Psoas muscle (tissue), 8 donors: ENCODE measurements at regions of chr12 and their contacts with region 1.

Region 1: DNA sequence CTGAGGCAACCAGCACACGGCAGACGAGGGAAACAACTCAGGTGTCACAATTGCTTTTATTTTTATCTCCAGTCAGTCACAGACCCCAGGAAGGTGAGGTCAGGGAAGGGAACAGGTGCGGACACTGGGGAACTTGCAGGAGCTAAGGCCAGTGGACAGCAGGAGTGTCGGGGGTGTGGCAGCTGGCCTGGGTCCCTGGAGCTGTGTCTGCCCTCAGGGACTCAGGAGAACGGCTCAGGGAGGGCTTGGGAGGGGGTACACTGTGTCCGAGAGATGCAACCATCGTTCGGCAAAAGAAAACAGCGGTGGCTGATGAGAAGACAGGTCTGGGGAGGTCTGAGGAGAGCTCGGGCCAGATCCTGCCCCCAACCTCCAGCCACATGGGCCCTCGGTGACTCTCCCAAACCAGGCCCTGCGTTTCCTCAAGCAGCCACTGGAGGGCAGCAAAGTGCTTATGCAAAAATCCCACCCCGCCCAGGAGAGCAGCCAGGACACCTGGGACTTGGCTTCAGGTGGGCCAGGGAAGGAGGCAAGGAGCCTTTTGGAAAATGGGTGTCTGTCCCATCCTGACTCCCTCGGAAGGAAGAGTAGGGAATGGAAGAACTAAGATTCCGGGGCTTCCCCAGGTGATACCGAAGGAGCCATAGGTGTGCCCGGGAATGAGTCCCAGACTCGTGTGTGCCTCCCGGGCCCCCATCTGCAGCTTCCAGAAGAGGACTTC is 24.1 kb upstream of the BCDIN3D start:
- DNase-seq: peak; percentile 74 to 85
- ATAC-seq: peak; percentile 58 to 79 (median 72)
- H3K4me3 ChIP-seq: no peak overlapping the region
- H3K27ac ChIP-seq: no peak overlapping the region
- H3K4me1 ChIP-seq: peaks cover 17% of the 10 kb centered on the region
- H3K27me3 ChIP-seq: no peaks in the 10 kb centered on the region
- CTCF ChIP-seq: peak; percentile 96

Region 2: DNA sequence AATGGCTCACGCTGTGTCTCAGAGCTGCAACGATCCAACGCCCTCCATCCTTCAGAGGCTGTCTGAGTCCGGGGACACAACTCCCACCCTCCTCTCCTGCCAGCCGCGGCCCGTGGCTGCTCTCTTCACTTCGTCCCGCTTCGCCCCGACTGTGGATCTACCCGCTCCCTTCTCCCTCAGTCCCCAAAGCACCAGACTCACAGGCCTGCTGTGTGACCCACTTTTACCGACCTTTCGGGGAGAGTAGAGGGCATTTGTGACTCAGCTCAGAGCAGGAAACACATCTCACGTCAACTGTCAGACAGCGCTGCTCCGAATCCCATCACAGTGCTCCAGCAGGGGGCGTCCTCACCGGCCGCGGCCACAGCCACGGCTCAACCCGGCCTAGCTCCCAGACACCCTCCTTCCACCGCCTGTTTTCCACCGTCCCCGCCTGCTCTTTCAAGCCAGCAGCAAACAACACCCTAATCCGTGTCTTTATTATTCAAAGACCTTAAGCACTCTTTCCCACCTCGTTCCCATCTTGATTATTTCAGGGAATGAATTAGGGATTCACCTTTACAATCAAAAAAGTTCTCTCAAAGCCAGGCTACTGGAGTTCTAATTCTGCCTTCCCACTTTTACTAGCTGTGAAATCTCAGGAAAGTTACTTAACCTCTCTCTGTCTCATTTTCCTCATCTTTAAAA is 78.5 kb after region 1 on chr12:
- intact Hi-C with region 1: loop called in 1 of 2 experiments (anchors 5 kb)
- DNase-seq: peak; percentile 84 to 86
- ATAC-seq: peak; percentile 87 to 97 (median 95)
- H3K4me3 ChIP-seq: peak overlapping the region; percentile 52
- H3K27ac ChIP-seq: no peak overlapping the region
- H3K4me1 ChIP-seq: no peaks in the 10 kb centered on the region
- H3K27me3 ChIP-seq: no peaks in the 10 kb centered on the region
- CTCF ChIP-seq: peak; percentile 74

Region 3: GRCh38 chr12:50283229-50283923 is 416.4 kb after region 1 on chr12 and contains the start of gene LIMA1:
- intact Hi-C with region 1: no loop called
- DNase-seq: peak; percentile 95 to 97
- ATAC-seq: peak; percentile 99
- H3K4me3 ChIP-seq: peak within 1 kb of the TSS; percentile 93
- H3K27ac ChIP-seq: peak within 1 kb of the TSS; percentile 96
- H3K4me1 ChIP-seq: peaks cover 13% of the 10 kb centered on the region
- H3K27me3 ChIP-seq: no peaks in the 10 kb centered on the region
- CTCF ChIP-seq: no peak
- total RNA-seq, gene LIMA1: 8.3 to 25.3 (median 17.5) TPM